ENCODE measurements at regions of chr3 and their contacts with region 1.

Region 1: GRCh38 chr3:47096959-47097358 is 67.0 kb downstream of the SETD2 start:
- DNase-seq: no peak

Region 2: DNA sequence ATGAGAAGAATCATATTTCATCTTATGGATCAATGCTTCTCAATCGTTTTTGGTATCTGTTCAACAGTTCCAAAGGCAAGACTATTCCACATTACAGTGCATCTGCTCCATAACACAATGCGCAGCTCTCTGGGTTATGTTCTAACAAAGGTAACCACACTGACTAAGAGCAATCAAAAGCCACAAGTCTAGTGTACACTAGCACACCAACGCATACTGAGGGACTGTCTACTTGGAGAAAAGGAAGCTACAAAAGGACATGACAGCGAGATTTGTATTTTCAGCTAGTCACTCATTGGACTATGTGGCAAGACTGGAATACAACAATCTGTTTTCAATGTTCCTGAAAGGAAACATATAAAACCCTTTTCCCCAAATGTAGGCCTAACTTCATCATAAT is 31.2 kb after region 1 on chr3:
- intact Hi-C with region 1: loop called in 1 of 2 experiments (anchors 1 kb)
- DNase-seq: no peak